ENCODE measurements at regions of chr14 and their contacts with region 1.

Region 1: DNA sequence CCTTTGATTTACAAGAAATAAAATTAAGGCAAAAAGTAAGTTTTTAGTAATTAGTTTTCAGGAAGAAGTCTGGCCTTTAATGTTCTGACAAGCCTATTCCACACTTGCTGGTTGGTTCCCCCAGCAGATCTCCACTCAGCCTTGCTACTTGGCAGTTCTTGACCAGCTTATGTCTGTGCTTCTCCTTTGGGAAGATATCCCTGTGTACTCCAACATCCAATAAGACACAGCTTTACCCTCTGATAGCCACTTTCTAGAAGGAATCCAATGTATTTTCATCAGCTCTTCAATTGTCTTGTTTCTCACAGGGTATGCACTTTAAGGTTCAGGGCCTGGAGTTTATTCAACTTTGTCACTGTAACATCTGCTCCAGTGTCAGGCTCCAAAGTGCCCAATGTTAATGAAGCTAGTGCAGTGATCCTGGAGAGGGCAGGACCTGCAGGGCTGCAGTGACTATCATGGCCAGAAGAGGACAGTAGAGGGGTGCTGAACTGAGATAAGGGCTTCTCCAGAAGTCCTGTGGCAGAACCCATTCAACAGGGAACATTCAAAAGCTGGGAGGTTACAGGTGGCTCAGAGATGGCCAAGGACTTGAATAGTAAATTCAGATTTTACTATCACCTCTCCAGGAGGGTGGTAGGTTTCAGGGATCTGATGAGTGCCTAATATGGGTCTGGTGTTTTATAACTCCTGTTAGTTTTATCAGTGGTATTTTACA is 22.9 kb downstream of the JKAMP start:
- DNase-seq: peak; percentile 42
- ATAC-seq: peak; percentile 96
- H3K4me3 ChIP-seq: no peak overlapping the region
- H3K27ac ChIP-seq: no peak overlapping the region
- H3K4me1 ChIP-seq: no peaks in the 10 kb centered on the region
- H3K27me3 ChIP-seq: no peaks in the 10 kb centered on the region
- CTCF ChIP-seq: peak; percentile 62 to 99 (median 94)
- POLR2A ChIP-seq: no peak
- RAD21 ChIP-seq: peak; percentile 61

Region 2: DNA sequence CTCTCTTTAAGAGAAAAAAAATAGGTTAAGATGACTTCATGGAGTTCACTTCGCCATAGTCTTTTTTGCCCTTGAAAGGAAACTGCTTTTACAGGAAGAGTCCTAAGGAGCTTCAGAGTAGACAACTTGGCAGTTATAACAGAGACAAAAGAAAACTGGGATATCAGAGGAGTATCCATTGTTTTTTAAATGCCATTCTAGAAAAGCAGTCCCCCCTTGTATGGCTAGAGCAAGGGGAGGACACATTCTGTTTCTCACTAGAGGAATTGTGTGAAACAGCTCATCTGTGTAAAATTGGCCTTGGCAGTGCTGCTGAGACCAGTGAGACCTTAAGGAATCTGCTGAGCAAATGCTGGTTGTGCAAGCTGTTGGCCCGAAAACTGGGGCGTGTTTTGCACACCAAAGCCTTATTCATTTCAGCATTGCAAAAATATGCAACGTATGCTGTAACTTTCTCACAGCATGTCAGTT is 170.0 kb before region 1 on chr14:
- CTCF ChIA-PET with region 1: no interaction called
- POLR2A ChIA-PET with region 1: no interaction called
- RAD21 ChIA-PET with region 1: no interaction called
- intact Hi-C with region 1: no loop called
- DNase-seq: no peak
- ATAC-seq: no peak
- H3K4me3 ChIP-seq: no peak overlapping the region
- H3K27ac ChIP-seq: no peak overlapping the region
- H3K4me1 ChIP-seq: peaks cover 6 to 8% of the 10 kb centered on the region in 2 experiments; a peak in 3 of 4 replicates
- H3K27me3 ChIP-seq: no peaks in the 10 kb centered on the region
- CTCF ChIP-seq: no peak
- POLR2A ChIP-seq: no peak
- RAD21 ChIP-seq: no peak

Region 3: GRCh38 chr14:59492384-59492783 is 14.8 kb before region 1 on chr14:
- CTCF ChIA-PET with region 1: interaction called, 12 read pairs
- POLR2A ChIA-PET with region 1: no interaction called
- RAD21 ChIA-PET with region 1: no interaction called
- intact Hi-C with region 1: no loop called
- DNase-seq: no peak
- ATAC-seq: no peak
- H3K4me3 ChIP-seq: no peak overlapping the region
- H3K27ac ChIP-seq: no peak overlapping the region
- H3K4me1 ChIP-seq: no peaks in the 10 kb centered on the region
- H3K27me3 ChIP-seq: no peaks in the 10 kb centered on the region
- CTCF ChIP-seq: no peak
- POLR2A ChIP-seq: no peak
- RAD21 ChIP-seq: no peak

Region 4: GRCh38 chr14:59570114-59570513 is 62.9 kb after region 1 on chr14:
- CTCF ChIA-PET with region 1: interaction called, 27 read pairs
- POLR2A ChIA-PET with region 1: interaction called, 4 read pairs
- RAD21 ChIA-PET with region 1: interaction called in 1 of 2 experiments, 3 read pairs
- intact Hi-C with region 1: no loop called
- DNase-seq: no peak
- ATAC-seq: peak; percentile 64
- H3K4me3 ChIP-seq: no peak overlapping the region
- H3K27ac ChIP-seq: no peak overlapping the region
- H3K4me1 ChIP-seq: peaks cover 0 to 6% of the 10 kb centered on the region in 2 experiments; a peak in 1 of 4 replicates
- H3K27me3 ChIP-seq: no peaks in the 10 kb centered on the region
- CTCF ChIP-seq: peak in 2 of 3 experiments; percentile 15 to 22; a peak in 1 of 6 replicates
- POLR2A ChIP-seq: no peak
- RAD21 ChIP-seq: peak; percentile 45

Region 5: GRCh38 chr14:59983048-59983447 is 475.8 kb after region 1 on chr14:
- CTCF ChIA-PET with region 1: no interaction called
- POLR2A ChIA-PET with region 1: no interaction called
- RAD21 ChIA-PET with region 1: no interaction called
- intact Hi-C with region 1: loop called (anchors 5 kb)
- DNase-seq: no peak
- ATAC-seq: no peak
- H3K4me3 ChIP-seq: no peak overlapping the region
- H3K27ac ChIP-seq: no peak overlapping the region
- H3K4me1 ChIP-seq: no peaks in the 10 kb centered on the region
- H3K27me3 ChIP-seq: no peaks in the 10 kb centered on the region
- CTCF ChIP-seq: no peak
- POLR2A ChIP-seq: no peak
- RAD21 ChIP-seq: no peak